AG04450 (cell line): ENCODE measurements at regions of chr1 and their contacts with region 1.

Region 1: DNA sequence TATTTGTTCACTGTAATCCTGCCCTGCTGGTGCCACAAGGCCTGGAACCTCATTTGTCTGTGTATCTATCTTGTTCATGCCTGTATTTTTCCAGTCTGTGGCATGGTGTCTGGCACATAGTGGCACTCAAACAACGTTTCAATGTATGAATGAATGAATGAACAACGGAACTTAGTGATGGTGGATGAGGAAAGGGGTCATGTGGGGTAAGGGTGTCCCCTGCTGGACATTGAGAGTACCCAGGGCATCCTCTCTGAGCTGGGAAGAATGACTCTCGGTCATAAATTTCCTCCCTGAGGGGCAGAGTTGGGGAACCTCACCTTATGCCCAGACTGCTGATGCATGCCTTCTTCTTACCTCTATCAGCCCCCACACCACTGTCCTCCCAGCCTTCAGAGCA is 18.9 kb upstream of the ZNF683 start:
- DNase-seq: no peak
- H3K4me3 ChIP-seq: no peak overlapping the region
- H3K27ac ChIP-seq: no peak overlapping the region
- H3K27me3 ChIP-seq: peaks cover 2% of the 10 kb centered on the region
- CTCF ChIP-seq: peak; percentile 90

Region 2: DNA sequence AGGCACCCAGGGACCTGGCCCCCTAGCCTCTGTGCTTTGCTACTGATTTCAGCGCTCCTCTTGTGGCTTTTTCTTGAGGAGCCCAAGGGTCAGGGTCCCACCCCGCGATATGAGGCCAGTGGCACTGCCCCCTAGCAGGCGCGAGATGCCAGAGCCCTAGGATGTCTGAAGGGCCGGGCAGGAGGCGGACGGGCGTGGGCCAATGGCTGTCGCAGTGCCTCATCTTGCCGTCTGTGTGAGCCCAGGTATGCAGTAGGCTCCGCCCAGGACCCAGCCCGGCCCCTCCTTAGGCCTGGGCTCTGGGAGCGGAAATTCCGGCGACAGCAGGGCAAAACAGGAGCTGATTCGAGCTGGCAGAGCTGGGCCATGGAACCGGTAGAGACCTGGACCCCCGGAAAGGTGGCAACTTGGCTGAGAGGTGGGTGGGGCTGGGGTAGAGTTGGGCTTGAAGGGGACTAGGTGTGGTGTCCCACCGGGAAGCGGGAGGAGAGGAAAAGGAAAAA is 214.2 kb before region 1 on chr1 and contains the start of gene CNKSR1:
- CTCF ChIA-PET with region 1: no interaction called
- POLR2A ChIA-PET with region 1: no interaction called
- DNase-seq: no peak
- H3K4me3 ChIP-seq: no peak within 1 kb of the TSS
- H3K27ac ChIP-seq: no peak within 1 kb of the TSS
- H3K27me3 ChIP-seq: peaks cover 4% of the 10 kb centered on the region
- CTCF ChIP-seq: no peak
- polyA plus RNA-seq, gene CNKSR1: 0.05 TPM in 1 of 2 replicates, not detected in the other

Region 3: GRCh38 chr1:26363549-26364448 is 27.7 kb before region 1 on chr1:
- CTCF ChIA-PET with region 1: interaction called, 10 read pairs
- POLR2A ChIA-PET with region 1: no interaction called
- DNase-seq: peak; percentile 15
- H3K4me3 ChIP-seq: no peak overlapping the region
- H3K27ac ChIP-seq: no peak overlapping the region
- H3K27me3 ChIP-seq: peaks cover 56% of the 10 kb centered on the region
- CTCF ChIP-seq: peak; percentile 97

Region 4: GRCh38 chr1:26378088-26378878 is 13.2 kb before region 1 on chr1:
- CTCF ChIA-PET with region 1: interaction called, 11 read pairs
- POLR2A ChIA-PET with region 1: no interaction called
- DNase-seq: peak; percentile 92
- H3K4me3 ChIP-seq: peak overlapping the region; percentile 37
- H3K27ac ChIP-seq: peak overlapping the region; percentile 98
- H3K27me3 ChIP-seq: no peaks in the 10 kb centered on the region
- CTCF ChIP-seq: no peak

Region 5: DNA sequence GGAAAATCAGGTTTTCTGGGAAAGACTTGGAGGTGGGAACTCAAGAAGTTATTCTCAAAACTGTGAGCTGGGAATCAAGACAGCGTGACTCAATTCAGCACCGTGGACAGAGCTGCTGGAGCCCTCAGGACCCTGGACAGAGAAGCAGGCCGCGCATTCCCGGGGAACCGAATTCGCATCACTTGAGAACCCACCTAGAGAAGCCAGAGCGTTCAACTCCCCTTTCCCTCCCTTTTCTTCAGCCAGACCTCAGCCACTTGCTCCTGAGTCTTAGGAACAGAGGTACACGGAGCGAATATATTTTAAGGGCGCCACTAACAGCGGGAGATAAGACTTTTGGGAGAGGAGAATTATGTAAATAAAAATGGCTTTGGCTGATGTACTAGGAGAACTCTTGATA is 17.2 kb after region 1 on chr1:
- CTCF ChIA-PET with region 1: interaction called, 14 read pairs
- POLR2A ChIA-PET with region 1: interaction called, 4 read pairs
- DNase-seq: peak; percentile 49
- H3K4me3 ChIP-seq: no peak overlapping the region
- H3K27ac ChIP-seq: no peak overlapping the region
- H3K27me3 ChIP-seq: peaks cover 39% of the 10 kb centered on the region
- CTCF ChIP-seq: no peak

Region 6: DNA sequence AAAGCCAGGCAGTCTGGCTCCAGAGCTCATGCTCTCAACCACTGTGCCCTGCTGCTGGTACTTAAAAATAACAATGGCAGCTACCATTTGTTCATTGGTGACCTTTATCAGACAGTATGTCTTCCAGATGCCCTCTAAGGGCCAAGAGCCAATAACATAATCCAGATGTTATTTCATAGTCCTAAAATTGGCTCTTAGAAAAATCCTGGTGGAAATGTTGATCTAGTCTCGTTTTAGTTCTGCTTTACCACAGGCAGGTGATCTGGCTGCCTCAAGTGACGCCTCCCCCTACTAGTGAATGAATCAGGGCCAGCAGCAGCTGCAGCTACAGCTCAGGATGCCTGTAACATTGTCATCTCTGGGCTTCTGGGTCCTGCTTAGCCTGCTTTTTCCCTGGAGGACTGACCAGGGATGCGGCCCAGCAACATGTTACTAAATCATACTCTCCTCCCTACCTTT is 68.2 kb after region 1 on chr1:
- CTCF ChIA-PET with region 1: no interaction called
- POLR2A ChIA-PET with region 1: no interaction called
- DNase-seq: no peak
- H3K4me3 ChIP-seq: no peak overlapping the region
- H3K27ac ChIP-seq: no peak overlapping the region
- H3K27me3 ChIP-seq: no peaks in the 10 kb centered on the region
- CTCF ChIP-seq: no peak

Region 7: DNA sequence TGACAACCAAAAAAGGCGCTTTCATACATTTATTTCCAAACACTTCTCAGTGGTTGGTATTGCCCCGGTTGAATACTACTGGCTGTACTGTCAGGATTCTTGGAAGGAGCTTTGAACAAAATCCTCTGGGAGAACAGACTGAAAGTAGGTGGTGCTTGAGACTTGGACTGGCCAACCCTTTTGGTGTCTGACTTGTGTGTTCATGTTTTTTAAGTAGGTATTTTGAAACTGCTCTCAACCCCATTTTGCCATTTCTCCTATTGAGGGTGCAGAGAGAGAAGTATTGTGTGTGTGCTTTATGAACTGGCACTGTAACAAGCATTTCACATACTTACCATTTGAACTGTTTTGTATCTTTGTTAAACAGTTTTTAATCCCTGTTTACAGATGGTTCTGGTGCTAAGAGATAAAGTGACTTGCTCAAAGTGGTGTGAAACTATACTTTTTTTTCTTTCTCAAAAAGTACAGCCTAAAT is 325.6 kb after region 1 on chr1:
- CTCF ChIA-PET with region 1: no interaction called
- POLR2A ChIA-PET with region 1: no interaction called
- DNase-seq: no peak
- H3K4me3 ChIP-seq: no peak overlapping the region
- H3K27ac ChIP-seq: no peak overlapping the region
- H3K27me3 ChIP-seq: no peaks in the 10 kb centered on the region
- CTCF ChIP-seq: no peak